ENCODE measurements at regions of chr12 and their contacts with region 1.

Region 1: GRCh38 chr12:117874842-117875434 is 93.9 kb downstream of the KSR2 start:
- DNase-seq: peak; percentile 45 to 71
- H3K4me3 ChIP-seq: no peak overlapping the region
- H3K27ac ChIP-seq: no peak overlapping the region
- H3K4me1 ChIP-seq: no peaks in the 10 kb centered on the region
- H3K27me3 ChIP-seq: no peaks in the 10 kb centered on the region
- CTCF ChIP-seq: peak; percentile 97

Region 2: GRCh38 chr12:117936722-117937484 is 62.0 kb after region 1 on chr12:
- CTCF ChIA-PET with region 1: no interaction called
- POLR2A ChIA-PET with region 1: no interaction called
- intact Hi-C with region 1: no loop called
- DNase-seq: no peak
- H3K4me3 ChIP-seq: no peak overlapping the region
- H3K27ac ChIP-seq: no peak overlapping the region
- H3K4me1 ChIP-seq: no peaks in the 10 kb centered on the region
- H3K27me3 ChIP-seq: no peaks in the 10 kb centered on the region
- CTCF ChIP-seq: no peak

Region 3: GRCh38 chr12:118035246-118036041 is 160.5 kb after region 1 on chr12:
- CTCF ChIA-PET with region 1: interaction called, 8 read pairs
- POLR2A ChIA-PET with region 1: no interaction called
- intact Hi-C with region 1: loop called (anchors 1 kb)
- DNase-seq: no peak
- H3K4me3 ChIP-seq: no peak overlapping the region
- H3K27ac ChIP-seq: no peak overlapping the region
- H3K4me1 ChIP-seq: no peaks in the 10 kb centered on the region
- H3K27me3 ChIP-seq: no peaks in the 10 kb centered on the region
- CTCF ChIP-seq: no peak

Region 4: DNA sequence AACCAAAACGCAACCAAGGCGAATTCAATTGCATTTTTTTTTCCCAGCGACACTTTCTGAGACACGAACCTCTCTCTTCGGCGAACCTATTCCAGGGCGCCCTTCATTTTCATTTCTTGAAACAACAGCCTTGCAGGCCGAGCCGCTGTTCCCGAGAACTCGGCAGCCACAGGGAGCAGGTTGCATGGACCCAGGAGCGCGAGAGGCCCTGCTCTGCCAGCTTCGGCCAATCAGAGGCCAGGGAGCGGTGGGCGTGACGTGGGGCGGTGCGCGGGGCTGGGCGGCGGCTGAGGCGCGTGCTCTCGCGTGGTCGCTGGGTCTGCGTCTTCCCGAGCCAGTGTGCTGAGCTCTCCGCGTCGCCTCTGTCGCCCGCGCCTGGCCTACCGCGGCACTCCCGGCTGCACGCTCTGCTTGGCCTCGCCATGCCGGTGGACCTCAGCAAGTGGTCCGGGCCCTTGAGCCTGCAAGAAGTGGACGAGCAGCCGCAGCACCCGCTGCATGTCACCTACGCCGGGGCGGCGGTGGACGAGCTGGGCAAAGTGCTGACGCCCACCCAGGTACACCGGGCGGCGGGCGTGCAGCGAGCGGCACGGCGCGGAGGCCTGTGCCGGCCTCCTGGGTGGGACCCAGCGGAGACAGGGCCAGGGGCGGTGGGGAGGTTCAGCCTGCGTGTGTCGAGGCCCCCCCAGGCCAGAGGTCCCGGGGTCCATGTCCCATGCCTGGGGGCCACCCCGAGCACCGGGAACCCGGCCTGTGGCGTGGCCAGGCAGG is 261.0 kb after region 1 on chr12 and contains the start of gene PEBP1:
- CTCF ChIA-PET with region 1: no interaction called
- POLR2A ChIA-PET with region 1: no interaction called
- intact Hi-C with region 1: loop called (anchors 10 kb)
- DNase-seq: peak; percentile 85 to 96
- H3K4me3 ChIP-seq: peak within 1 kb of the TSS; percentile 83
- H3K27ac ChIP-seq: 0 out of 2 replicates have a peak within 1 kb of the TSS, but pooled peaks have one; percentile 34
- H3K4me1 ChIP-seq: peaks cover 38% of the 10 kb centered on the region
- H3K27me3 ChIP-seq: no peaks in the 10 kb centered on the region
- CTCF ChIP-seq: no peak
- total RNA-seq, gene PEBP1: 188 and 189 TPM in 2 replicates

Region 5: DNA sequence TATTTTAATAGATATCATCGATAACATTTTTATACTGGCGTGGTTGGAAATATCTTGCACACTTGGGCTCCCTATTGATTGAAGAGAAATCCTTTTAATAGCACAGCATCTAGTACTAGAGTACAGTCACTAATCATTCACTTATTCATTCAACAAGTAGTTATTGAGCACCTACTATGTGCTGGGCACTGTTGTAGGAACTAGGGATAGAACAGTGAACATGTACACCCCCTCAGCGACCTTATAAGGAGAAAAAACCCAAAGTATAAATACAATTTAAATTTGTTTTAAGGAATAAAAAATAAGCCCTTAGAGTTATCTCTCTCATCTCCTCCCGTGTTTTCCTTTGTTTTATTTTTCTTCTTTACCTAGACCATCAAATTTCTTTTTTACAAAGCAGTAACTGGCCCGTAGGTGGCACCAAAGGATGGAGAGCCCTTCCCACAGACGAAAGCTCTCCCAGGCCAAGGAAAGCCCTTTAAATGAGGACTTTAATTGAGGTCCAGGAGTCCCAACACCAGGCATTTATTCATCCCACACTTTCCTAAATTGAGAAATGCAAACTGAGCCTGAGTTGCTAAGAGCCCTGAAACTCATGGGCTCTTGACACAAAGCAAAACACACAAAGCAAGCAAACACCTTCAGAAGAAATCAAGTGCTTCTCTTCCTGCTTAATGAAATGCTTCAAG is 290.0 kb after region 1 on chr12:
- CTCF ChIA-PET with region 1: no interaction called
- POLR2A ChIA-PET with region 1: no interaction called
- intact Hi-C with region 1: loop called (anchors 10 kb)
- DNase-seq: peak in 1 of 2 experiments; percentile 30
- H3K4me3 ChIP-seq: no peak overlapping the region
- H3K27ac ChIP-seq: no peak overlapping the region
- H3K4me1 ChIP-seq: no peaks in the 10 kb centered on the region
- H3K27me3 ChIP-seq: no peaks in the 10 kb centered on the region
- CTCF ChIP-seq: peak; percentile 78